Breast epithelium (tissue), 4 donors: ENCODE measurements at regions of chr1 and their contacts with region 1.

Region 1: GRCh38 chr1:202649553-202650392 is 60.5 kb downstream of the SYT2 start:
- DNase-seq: no peak
- H3K4me3 ChIP-seq: no peak overlapping the region
- H3K27ac ChIP-seq: no peak overlapping the region
- H3K4me1 ChIP-seq: no peaks in the 10 kb centered on the region
- H3K27me3 ChIP-seq: no peaks in the 10 kb centered on the region
- CTCF ChIP-seq: no peak
- POLR2A ChIP-seq: no peak

Region 2: GRCh38 chr1:203534527-203535230 is 884.9 kb after region 1 on chr1:
- intact Hi-C with region 1: loop called (anchors 5 kb)
- DNase-seq: peak; percentile 40 to 61
- H3K4me3 ChIP-seq: no peak overlapping the region
- H3K27ac ChIP-seq: peak overlapping the region in 1 of 2 donors; percentile 26
- H3K4me1 ChIP-seq: no peaks in the 10 kb centered on the region
- H3K27me3 ChIP-seq: no peaks in the 10 kb centered on the region
- CTCF ChIP-seq: no peak
- POLR2A ChIP-seq: no peak